Activated CD4-positive, alpha-beta memory T cell treated with anti-CD3 and anti-CD28 coated beads, Interleukin-2, amount 10 ng/mL, durations not matched to agents 7 days and 5 days (primary cell): ENCODE measurements at regions of chr19 and their contacts with region 1.

Region 1: DNA sequence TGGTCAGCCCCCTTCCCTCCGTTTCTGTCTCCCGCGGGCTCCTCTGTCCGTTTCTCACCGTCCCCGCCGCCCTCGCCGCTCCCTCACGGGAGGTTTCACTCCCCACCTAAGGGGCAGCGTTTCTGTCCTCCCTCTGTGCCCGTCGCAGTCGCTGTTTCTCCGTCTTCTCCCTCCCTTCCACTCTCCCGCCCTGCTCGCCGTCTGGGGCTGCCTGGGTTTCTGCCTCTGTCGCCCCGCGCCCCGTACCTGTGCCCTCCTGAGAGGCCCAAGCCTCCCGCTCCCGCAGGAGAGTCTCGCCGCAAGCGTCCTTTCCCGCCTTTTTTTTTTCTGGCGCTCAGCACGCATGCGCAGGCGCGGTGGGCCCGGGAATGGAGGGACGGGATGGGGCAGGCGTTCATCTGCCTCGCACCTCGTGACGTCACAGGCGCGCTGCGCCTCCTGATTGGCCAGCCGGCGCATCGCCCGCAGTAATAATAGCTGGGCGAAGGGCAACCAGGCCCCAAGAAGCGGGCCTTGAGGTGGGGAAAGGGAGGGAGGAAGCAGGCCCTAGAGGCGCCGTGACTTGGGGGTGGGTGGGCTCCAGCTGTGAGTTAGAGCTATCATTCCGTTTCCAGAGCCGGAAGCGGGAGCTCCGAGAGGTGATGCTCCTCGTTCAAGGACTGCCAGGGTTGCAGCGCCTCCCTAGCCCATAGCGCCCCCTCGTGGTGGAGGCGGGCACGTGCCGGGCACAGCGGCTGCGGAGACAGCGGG is 15.4 kb downstream of the SSC5D start:
- DNase-seq: peak; percentile 93
- H3K4me3 Mint-ChIP-seq: peak overlapping the region; percentile 72
- H3K27ac Mint-ChIP-seq: peak overlapping the region; percentile 64
- H3K4me1 Mint-ChIP-seq: peaks cover 28% of the 10 kb centered on the region
- H3K27me3 Mint-ChIP-seq: peaks cover 10% of the 10 kb centered on the region

Region 2: DNA sequence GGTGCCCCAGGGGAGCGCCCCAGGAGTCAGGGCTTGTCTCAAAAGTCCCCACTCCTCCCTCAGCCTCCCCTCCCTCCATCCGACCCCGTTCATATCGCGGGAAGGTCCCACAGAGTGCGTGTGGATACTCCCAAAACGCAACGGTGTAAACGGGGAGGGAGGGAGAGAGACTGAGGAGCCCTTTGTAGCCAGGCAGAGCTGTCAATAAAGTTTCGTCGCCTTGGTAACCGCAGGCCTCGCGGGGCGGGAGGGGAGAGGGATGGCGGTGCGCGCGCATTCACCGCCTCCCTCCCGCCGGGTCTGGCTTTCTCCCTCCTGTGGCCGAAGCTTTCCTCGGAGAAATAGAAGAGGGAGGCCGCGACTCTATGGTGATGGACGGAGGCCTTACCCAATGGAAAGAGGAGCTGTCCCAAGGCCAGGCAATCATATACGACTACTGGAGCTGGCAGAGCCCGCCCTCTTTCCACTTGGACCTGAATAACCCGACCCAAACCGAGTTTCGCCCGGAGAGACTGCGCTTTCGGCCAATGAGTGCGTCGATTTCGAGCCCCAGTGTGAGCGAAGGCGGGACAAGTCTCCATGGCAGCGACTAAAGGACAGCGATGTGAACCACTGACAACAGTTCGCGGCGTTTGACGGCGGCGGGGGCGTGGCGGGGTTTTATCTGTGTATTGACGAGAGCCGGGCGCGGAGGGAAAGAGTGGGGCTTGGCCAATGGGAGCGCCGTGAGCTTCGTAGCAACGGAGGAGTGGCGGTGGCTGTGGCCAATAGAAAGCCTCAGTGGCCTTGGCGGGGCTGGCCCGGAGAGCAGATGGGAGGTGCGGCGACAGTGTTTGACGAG is 164.4 kb before region 1 on chr19 and contains the start of gene KMT5C:
- CTCF ChIA-PET with region 1: interaction called, 14 read pairs
- POLR2A ChIA-PET with region 1: no interaction called
- DNase-seq: peak; percentile 100
- H3K4me3 Mint-ChIP-seq: peak within 1 kb of the TSS; percentile 90
- H3K27ac Mint-ChIP-seq: peak within 1 kb of the TSS; percentile 91
- H3K4me1 Mint-ChIP-seq: peaks cover 19% of the 10 kb centered on the region
- H3K27me3 Mint-ChIP-seq: peaks cover 12% of the 10 kb centered on the region
- total RNA-seq, gene KMT5C: 27.2 to 28.9 TPM

Region 3: DNA sequence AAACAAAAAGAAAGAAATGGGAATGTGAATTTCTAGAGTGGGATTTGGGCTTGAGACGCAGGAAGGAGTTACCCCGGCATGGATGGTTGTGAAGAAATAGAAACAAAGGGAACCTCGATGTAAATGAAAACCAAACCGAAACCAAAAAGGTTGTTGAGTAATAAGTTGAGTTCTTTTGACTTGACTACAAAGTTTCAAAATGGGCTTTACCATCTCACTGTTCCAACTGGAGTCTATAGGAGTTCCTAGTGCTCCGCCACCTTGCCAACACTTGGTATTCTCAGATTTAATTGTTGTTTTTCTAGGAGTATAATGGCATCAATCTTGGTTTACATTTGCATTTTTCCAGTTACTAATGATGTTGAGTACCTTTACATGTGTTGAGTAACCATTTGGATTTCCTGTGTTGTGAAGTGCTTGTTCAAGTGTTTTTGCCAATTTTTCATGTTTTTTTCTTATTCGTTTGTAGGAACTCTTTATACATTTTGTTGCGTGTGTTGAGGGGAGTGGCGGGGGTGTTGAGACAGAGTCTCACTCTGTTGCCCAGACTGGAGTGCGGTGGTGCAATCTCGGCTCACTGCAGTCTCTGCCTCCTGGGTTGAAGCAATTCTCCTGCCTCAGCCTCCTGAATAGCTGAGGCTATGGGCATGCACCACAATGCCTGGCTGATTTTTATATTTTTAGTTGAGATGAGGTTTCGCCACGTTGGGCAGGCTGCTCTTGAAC is 105.3 kb before region 1 on chr19:
- CTCF ChIA-PET with region 1: no interaction called
- POLR2A ChIA-PET with region 1: no interaction called
- DNase-seq: no peak
- H3K4me3 Mint-ChIP-seq: peak overlapping the region; percentile 19
- H3K27ac Mint-ChIP-seq: peak overlapping the region; percentile 77
- H3K4me1 Mint-ChIP-seq: peaks cover 48% of the 10 kb centered on the region
- H3K27me3 Mint-ChIP-seq: no peaks in the 10 kb centered on the region

Region 4: GRCh38 chr19:55467236-55468053 is 36.2 kb before region 1 on chr19:
- CTCF ChIA-PET with region 1: interaction called, 63 read pairs
- POLR2A ChIA-PET with region 1: interaction called, 4 read pairs
- DNase-seq: peak; percentile 73
- H3K4me3 Mint-ChIP-seq: no peak overlapping the region
- H3K27ac Mint-ChIP-seq: no peak overlapping the region
- H3K4me1 Mint-ChIP-seq: peaks cover 6% of the 10 kb centered on the region
- H3K27me3 Mint-ChIP-seq: peaks cover 2% of the 10 kb centered on the region

Region 5: DNA sequence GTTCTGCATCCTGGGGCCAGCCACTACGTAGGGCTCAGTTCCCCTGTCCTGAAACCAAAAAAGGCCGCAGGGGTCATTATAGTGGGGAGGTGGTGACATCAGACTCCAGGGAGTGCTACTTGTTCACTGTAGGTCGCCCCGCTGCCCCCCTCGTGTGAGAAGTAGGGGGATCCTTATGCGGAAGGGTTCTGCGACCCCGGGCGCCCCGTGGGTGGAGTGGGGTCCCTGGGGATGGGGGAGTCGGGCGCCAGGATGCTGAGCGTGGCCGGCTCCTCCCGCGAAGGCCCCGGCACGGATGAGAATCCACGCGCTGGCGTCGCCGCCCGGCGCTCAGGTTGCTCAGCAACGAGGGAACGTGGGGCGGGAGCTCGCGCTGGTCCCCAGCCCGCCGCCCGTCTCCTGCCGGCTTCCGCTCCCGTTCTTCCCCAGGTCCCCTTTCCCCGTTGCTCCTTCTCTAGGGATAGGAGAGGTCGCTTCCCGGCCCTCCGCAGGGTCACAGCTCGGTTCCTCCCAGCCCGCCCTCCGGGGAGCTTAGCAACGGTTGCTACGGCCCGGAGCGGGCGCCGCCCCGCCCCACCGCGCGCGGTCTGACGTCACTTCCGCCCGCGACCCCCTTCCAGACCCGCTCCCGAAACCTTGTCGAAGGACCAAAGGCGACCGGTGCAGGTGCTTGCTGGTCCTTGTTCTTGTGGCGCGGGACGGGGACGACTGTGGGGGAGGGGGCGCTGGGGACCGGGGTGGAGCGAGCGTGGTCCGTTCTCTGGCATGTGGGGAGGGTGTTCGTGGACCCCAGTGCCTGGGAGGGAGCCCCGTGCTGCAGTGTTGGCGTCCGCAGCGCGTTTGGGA is 18.9 kb before region 1 on chr19 and contains the start of gene NAT14:
- CTCF ChIA-PET with region 1: interaction called, 23 read pairs
- POLR2A ChIA-PET with region 1: interaction called, 6 read pairs
- DNase-seq: peak; percentile 66
- H3K4me3 Mint-ChIP-seq: peak within 1 kb of the TSS; percentile 73
- H3K27ac Mint-ChIP-seq: no peak within 1 kb of the TSS
- H3K4me1 Mint-ChIP-seq: peaks cover 14% of the 10 kb centered on the region
- H3K27me3 Mint-ChIP-seq: no peaks in the 10 kb centered on the region
- total RNA-seq, gene NAT14: 11.9 to 12.0 TPM

Region 6: DNA sequence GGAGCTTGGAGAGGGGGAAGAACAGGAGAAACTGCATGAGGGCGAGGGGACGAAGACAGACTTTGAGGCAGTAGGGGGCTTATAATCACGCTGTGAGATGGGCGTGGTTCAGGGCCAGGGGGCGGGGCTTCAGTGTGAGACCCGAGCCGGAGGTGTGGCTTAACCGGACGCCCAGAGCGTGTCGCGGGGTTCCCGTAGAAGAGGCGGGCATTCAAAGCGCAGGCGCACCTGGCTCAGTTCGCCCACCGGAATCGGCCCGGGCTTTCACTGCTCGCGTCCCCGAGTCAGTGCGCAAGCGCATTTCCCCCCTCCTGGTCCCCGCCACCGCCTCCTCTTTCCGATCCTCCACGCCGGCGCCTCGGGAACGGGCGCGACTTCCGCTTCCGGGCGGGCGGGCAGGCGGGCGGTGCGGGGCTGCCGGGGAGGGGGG is 101.5 kb after region 1 on chr19:
- CTCF ChIA-PET with region 1: interaction called, 19 read pairs
- POLR2A ChIA-PET with region 1: interaction called, 5 read pairs
- DNase-seq: peak; percentile 99
- H3K4me3 Mint-ChIP-seq: peak overlapping the region; percentile 76
- H3K27ac Mint-ChIP-seq: peak overlapping the region; percentile 95
- H3K4me1 Mint-ChIP-seq: peaks cover 53% of the 10 kb centered on the region
- H3K27me3 Mint-ChIP-seq: no peaks in the 10 kb centered on the region